ENCODE measurements at regions of chr22 and their contacts with region 1.

Region 1: DNA sequence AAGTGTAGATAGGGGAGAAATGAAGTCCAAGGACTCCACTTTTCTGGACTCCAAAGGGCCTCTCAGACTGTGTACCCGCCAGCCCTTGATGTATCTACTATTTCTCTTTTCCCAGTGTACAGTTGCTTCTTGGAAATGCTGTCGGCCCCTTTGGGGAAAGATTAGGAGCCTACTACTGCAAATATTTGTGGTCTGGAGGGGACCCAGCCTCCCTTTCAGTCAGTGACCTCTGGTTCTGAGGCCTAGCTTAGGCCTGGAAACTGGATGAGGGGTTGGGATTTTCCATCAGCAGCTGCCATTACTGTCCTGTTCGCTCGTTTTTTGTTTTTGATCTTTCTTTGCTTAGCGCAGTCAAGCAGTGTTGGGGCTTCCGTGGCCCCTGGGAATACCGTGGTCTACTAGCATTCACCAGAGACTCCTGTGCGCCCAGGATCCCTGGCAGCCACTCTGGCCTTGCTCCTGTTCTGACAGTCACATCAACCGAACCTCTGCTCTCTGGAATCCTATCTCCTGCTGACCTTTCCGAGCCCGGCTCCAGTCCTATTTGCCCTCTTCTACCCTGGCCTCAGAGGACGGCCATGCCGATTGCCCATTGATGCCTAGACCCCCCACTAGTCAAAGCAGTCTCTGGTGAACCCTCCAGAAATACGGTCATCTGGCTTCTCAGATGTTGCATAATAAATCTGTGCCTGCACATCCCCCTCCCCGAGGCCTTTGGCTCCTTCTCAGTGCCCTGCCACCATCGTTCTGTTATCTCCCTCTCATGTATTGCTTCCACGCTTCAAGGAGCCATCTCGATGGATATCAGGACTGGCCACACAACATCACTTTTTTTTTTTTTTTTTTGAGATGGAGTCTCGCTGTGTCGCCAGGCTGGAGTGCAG is 1.3 kb upstream of the RRP7A start:
- DNase-seq: no peak
- ATAC-seq: no peak
- H3K4me3 ChIP-seq: no peak overlapping the region
- H3K4me3 Mint-ChIP-seq: peak overlapping the region; percentile 98
- H3K27ac ChIP-seq: no peak overlapping the region
- H3K27ac Mint-ChIP-seq: peak overlapping the region; percentile 76
- H3K4me1 ChIP-seq: peaks cover 3 to 18% of the 10 kb centered on the region in 2 donors
- H3K4me1 Mint-ChIP-seq: peaks cover 17% of the 10 kb centered on the region
- H3K27me3 ChIP-seq: no peaks in the 10 kb centered on the region
- H3K27me3 Mint-ChIP-seq: no peaks in the 10 kb centered on the region
- CTCF ChIP-seq: no peak

Region 2: DNA sequence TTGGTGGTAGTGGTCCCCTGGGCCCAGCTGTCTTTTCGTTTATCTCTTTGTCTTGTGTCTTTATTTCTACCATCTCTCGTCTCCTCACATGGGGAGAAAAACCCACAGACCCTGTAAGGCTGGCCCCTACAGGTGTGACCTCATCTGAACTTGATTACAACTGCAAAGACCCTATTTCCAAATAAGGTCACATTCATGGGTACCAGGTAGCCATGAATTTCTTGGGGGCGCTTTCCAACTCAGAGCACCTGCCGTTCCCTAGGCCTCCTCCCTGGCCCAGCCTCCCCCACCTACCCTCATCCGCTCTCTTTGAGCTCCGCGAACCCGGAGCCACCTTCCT is 12.7 kb after region 1 on chr22:
- CTCF ChIA-PET with region 1: interaction called, 4 read pairs
- POLR2A ChIA-PET with region 1: interaction called, 5 read pairs
- intact Hi-C with region 1: loop called (anchors 1 kb)
- DNase-seq: no peak
- ATAC-seq: no peak
- H3K4me3 ChIP-seq: peak overlapping the region in 4 of 5 experiments; percentile 37 to 54 (median 53)
- H3K4me3 Mint-ChIP-seq: peak overlapping the region; percentile 90
- H3K27ac ChIP-seq: peak overlapping the region; percentile 92 to 93
- H3K27ac Mint-ChIP-seq: peak overlapping the region; percentile 97
- H3K4me1 ChIP-seq: peaks cover 38 to 66% of the 10 kb centered on the region in 2 donors
- H3K4me1 Mint-ChIP-seq: peaks cover 67% of the 10 kb centered on the region
- H3K27me3 ChIP-seq: no peaks in the 10 kb centered on the region
- H3K27me3 Mint-ChIP-seq: no peaks in the 10 kb centered on the region
- CTCF ChIP-seq: no peak